Posterior cingulate gyrus (tissue), 11 donors: ENCODE measurements at regions of chr19 and their contacts with region 1.

Region 1: DNA sequence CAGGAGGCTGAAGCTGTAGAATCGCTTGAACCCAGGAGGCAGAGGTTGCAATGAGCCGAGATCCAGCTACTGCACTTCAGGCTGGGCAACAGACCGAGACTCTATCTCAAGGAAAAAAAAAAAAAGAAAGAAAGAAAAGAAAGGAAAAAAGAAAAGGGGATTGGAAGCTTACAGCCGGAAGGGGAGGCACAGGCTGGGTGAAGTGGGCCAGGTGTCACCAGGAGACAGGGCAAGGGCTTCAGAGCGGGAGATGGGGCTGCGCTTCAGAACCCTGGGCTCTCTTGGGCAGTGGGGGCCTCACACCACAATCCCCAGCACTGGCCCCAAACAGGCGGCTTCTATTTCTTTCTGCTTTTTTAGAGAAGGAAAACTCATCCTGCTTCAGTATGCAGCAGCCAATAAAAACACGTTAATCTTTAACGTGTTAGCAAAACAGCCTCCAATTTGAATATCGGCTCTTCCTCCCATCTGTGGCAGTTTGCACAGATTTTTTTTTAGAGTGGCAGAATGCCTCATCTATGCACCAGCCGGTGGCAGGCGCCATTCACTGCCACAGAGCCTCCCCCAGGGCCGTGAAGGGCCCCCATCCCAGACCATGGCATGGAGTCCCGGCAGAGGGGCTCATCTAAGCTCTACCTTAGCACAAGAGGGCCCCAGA is 46.6 kb upstream of the C19orf12 start:
- DNase-seq: no peak

Region 2: GRCh38 chr19:29789007-29789406 is 27.3 kb after region 1 on chr19:
- intact Hi-C with region 1: loop called (anchors 2 kb)
- DNase-seq: no peak

Region 3: DNA sequence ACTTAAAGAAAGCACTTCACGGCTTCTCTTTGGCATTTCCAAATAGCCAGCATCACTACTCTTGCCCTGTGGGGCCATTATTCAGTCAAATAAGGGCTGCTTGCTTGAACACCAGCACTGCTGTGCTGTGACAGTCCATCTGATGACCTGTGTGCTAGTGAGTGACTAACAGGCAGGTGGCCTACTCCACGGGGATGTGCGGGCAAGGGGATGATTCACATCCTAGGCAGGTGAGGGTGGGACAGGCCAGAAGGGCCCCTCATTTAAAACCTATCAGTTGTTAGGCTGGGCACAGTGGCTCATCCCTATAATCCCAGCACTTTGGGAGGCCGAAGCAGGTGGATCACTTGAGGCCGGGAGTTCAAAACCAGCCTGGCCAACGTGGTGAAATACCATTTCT is 58.3 kb after region 1 on chr19:
- intact Hi-C with region 1: loop called (anchors 10 kb)
- DNase-seq: peak in 1 of 10 donors; percentile 25

Region 4: GRCh38 chr19:29873024-29873800 is 111.5 kb after region 1 on chr19:
- intact Hi-C with region 1: loop called (anchors 10 kb)
- DNase-seq: peak; percentile 24 to 93 (median 62)